Left lung (tissue), 14 donors: ENCODE measurements at regions of chr12 and their contacts with region 1.

Region 1: GRCh38 chr12:71746983-71747611 is 7.6 kb upstream of the RAB21 start:
- DNase-seq: peak in 2 of 4 donors; percentile 51 to 71
- ATAC-seq: peak; percentile 98
- H3K4me3 ChIP-seq: no peak overlapping the region
- H3K27ac ChIP-seq: no peak overlapping the region
- H3K4me1 ChIP-seq: peaks cover 0 to 3% of the 10 kb centered on the region in 2 donors
- H3K27me3 ChIP-seq: peaks cover 0 to 8% of the 10 kb centered on the region in 2 donors
- CTCF ChIP-seq: peak; percentile 59 to 67

Region 2: DNA sequence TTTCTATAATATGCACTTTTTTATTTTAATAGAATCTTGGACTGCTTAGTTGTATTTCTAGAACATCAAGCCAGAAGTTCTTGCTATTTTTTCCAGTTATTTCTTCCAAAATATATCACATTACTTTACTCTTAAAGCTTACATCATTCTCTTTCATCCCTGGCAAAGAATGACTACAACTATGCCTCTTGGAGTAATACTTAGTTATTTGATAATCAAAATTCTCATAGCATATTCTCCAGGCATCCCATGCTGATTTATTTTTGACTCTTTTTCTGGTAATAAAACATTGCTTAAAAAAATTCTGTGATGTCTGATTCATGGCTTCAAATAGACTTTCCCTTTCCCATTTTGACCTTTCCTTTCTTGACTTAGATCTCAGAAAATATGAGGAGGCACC is 470.6 kb before region 1 on chr12:
- intact Hi-C with region 1: no loop called
- DNase-seq: no peak
- ATAC-seq: no peak
- H3K4me3 ChIP-seq: no peak overlapping the region
- H3K27ac ChIP-seq: no peak overlapping the region
- H3K4me1 ChIP-seq: no peaks in the 10 kb centered on the region
- H3K27me3 ChIP-seq: no peaks in the 10 kb centered on the region
- CTCF ChIP-seq: no peak

Region 3: GRCh38 chr12:71415336-71416231 is 331.5 kb before region 1 on chr12:
- intact Hi-C with region 1: loop called in 1 of 2 experiments (anchors 10 kb)
- DNase-seq: peak in 2 of 4 donors; percentile 28 to 56
- ATAC-seq: peak; percentile 86
- H3K4me3 ChIP-seq: no peak overlapping the region
- H3K27ac ChIP-seq: no peak overlapping the region
- H3K4me1 ChIP-seq: no peaks in the 10 kb centered on the region
- H3K27me3 ChIP-seq: no peaks in the 10 kb centered on the region
- CTCF ChIP-seq: peak; percentile 47 to 67

Region 4: DNA sequence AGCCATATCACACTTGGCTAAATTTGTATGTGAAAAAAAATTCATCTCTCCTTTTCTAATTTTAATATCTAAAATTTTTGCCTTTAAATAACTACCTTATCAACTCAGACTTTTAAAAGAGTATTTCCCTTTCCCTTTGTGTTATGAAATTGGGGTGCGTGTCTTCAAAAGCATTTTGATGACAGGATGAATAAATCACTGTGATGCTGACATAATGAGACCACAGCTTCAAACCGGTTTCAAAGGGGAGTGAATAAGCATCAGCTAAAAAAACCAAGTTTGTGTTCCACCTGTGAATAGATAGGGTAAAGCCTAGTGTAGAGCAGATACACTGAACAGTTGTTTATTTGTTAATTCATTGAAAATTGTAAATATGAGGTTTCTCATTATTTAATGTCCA is 222.5 kb before region 1 on chr12:
- intact Hi-C with region 1: no loop called
- DNase-seq: no peak
- ATAC-seq: no peak
- H3K4me3 ChIP-seq: no peak overlapping the region
- H3K27ac ChIP-seq: no peak overlapping the region
- H3K4me1 ChIP-seq: no peaks in the 10 kb centered on the region
- H3K27me3 ChIP-seq: no peaks in the 10 kb centered on the region
- CTCF ChIP-seq: no peak